ENCODE measurements at regions of chr18 and their contacts with region 1.

Region 1: DNA sequence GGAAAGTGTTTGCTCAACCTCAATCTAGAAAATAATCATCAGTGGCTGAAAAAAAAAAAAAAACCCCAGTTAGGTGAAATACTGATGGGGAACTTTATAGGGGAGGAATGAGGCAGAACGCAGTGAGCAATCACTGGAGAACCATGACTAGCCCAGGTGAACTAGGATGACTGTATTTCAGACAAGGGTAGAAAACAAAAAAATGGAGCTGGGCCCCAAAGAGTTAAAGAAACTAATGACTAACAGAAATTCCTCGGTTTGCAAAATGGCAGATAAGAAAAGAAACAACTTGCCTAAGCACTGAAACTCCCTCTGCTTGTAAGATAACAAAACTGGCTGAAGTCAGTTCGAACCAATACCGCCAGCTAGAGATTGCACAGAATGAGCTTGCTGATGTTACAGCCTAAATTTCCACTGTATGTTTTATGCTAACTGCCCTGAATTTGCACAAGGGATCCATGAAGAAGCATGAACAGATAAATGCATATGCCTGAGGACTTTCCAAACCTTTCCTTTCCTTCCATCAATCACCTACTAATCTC is 245.9 kb downstream of the METTL4 start:
- DNase-seq: no peak
- ATAC-seq: peak; percentile 49
- H3K4me3 ChIP-seq: no peak overlapping the region
- H3K27ac ChIP-seq: no peak overlapping the region
- H3K4me1 ChIP-seq: no peaks in the 10 kb centered on the region
- H3K27me3 ChIP-seq: no peaks in the 10 kb centered on the region
- CTCF ChIP-seq: no peak
- EP300 ChIP-seq: no peak
- POLR2A ChIP-seq: no peak
- RAD21 ChIP-seq: no peak

Region 2: GRCh38 chr18:2301316-2301715 is 24.1 kb before region 1 on chr18:
- CTCF ChIA-PET with region 1: no interaction called
- POLR2A ChIA-PET with region 1: no interaction called
- RAD21 ChIA-PET with region 1: no interaction called
- SMC1A ChIA-PET with region 1: no interaction called
- in situ Hi-C with region 1: no loop called
- intact Hi-C with region 1: no loop called
- DNase-seq: no peak
- ATAC-seq: no peak
- H3K4me3 ChIP-seq: no peak overlapping the region
- H3K27ac ChIP-seq: no peak overlapping the region
- H3K4me1 ChIP-seq: no peaks in the 10 kb centered on the region
- H3K27me3 ChIP-seq: no peaks in the 10 kb centered on the region
- CTCF ChIP-seq: no peak
- EP300 ChIP-seq: no peak
- POLR2A ChIP-seq: no peak
- RAD21 ChIP-seq: no peak

Region 3: GRCh38 chr18:2312440-2312839 is 12.9 kb before region 1 on chr18:
- CTCF ChIA-PET with region 1: interaction called, 6 read pairs
- POLR2A ChIA-PET with region 1: no interaction called
- RAD21 ChIA-PET with region 1: interaction called, 5 read pairs
- SMC1A ChIA-PET with region 1: interaction called, 17 read pairs
- in situ Hi-C with region 1: no loop called
- intact Hi-C with region 1: no loop called
- DNase-seq: peak; percentile 20
- ATAC-seq: peak; percentile 87
- H3K4me3 ChIP-seq: no peak overlapping the region
- H3K27ac ChIP-seq: no peak overlapping the region
- H3K4me1 ChIP-seq: no peaks in the 10 kb centered on the region
- H3K27me3 ChIP-seq: 0 out of 4 replicates have a peak, but pooled peaks cover 0 to 2% of the 10 kb centered on the region in 2 experiments
- CTCF ChIP-seq: no peak
- EP300 ChIP-seq: peak in 1 of 2 experiments; percentile 35; a peak in 1 of 4 replicates
- POLR2A ChIP-seq: no peak
- RAD21 ChIP-seq: no peak

Measured in GM12878 (cell line).